Heart right ventricle (tissue), 16 donors: ENCODE measurements at regions of chr7 and their contacts with region 1.

Region 1: GRCh38 chr7:141731476-141732149 is 6.5 kb upstream of the SSBP1 start:
- DNase-seq: peak; percentile 8 to 25
- ATAC-seq: peak in 7 of 8 donors; percentile 40 to 83 (median 67)
- H3K4me3 ChIP-seq: peak overlapping the region in 2 of 10 donors; percentile 6 to 17
- H3K27ac ChIP-seq: no peak overlapping the region
- H3K4me1 ChIP-seq: peaks cover 0 to 1% (median 0%) of the 10 kb centered on the region in 9 donors
- H3K27me3 ChIP-seq: no peaks in the 10 kb centered on the region
- CTCF ChIP-seq: no peak

Region 2: GRCh38 chr7:141674702-141675101 is 56.9 kb before region 1 on chr7:
- intact Hi-C with region 1: loop called in 2 of 10 experiments (anchors 5 to 10 kb)
- DNase-seq: no peak
- ATAC-seq: peak in 6 of 8 donors; percentile 32 to 74 (median 50)
- H3K4me3 ChIP-seq: no peak overlapping the region
- H3K27ac ChIP-seq: peak overlapping the region; percentile 38 to 88 (median 72)
- H3K4me1 ChIP-seq: peaks cover 0 to 48% (median 11%) of the 10 kb centered on the region in 9 donors
- H3K27me3 ChIP-seq: no peaks in the 10 kb centered on the region
- CTCF ChIP-seq: peak in 6 of 9 donors; percentile 28 to 53 (median 42)

Region 3: GRCh38 chr7:141915565-141915964 is 184.0 kb after region 1 on chr7:
- intact Hi-C with region 1: no loop called
- DNase-seq: no peak
- ATAC-seq: no peak
- H3K4me3 ChIP-seq: no peak overlapping the region
- H3K27ac ChIP-seq: no peak overlapping the region
- H3K4me1 ChIP-seq: no peaks in the 10 kb centered on the region
- H3K27me3 ChIP-seq: no peaks in the 10 kb centered on the region
- CTCF ChIP-seq: no peak